K562 (cell line): ENCODE measurements at regions of chr10 and their contacts with region 1.

Region 1: DNA sequence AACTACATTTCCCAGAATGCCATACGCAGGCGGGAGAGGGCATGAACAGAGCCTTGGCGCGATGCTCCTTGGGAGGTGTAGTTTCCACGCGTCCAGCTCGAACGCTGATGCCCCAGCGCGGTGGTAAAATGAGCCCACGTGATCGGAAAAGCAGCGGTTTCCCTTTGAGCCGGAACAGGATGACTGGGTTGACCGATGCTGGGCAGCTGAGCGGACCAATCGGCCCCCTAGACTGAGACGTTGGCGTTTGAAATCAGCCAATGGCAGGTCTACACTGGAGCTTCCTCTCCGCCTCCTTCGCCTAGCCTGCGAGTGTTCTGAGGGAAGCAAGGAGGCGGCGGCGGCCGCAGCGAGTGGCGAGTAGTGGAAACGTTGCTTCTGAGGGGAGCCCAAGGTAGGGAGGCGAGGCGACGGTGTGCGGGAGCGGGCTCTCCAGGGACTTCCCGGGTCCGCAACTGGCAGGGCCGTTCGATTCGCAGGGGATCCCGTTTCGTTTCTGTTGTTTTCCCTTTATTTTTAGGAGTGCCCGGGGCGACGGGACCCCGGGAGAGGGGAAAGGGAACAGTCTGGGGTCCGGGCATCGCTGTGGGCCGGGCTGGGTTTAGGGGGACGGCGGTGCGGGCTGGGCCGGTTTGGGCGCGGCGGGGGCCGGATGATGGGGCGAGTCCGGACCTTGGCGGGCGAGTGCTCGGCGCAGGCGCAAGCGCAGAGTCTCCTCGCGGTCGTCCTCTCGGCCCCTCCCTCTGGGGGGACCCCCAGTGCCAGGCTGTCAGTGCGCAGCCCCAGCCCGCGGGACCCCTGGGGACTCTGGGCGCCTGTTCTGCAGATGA is at the start of gene BUB3:
- DNase-seq: peak; percentile 95 to 97 (median 96)
- ATAC-seq: peak; percentile 97
- H3K4me3 ChIP-seq: peak within 1 kb of the TSS; percentile 90
- H3K27ac ChIP-seq: peak within 1 kb of the TSS; percentile 98
- H3K4me1 ChIP-seq: peaks cover 13 to 25% of the 10 kb centered on the region in 2 experiments; a peak in 3 of 5 replicates
- H3K27me3 ChIP-seq: no peaks in the 10 kb centered on the region
- CTCF ChIP-seq: no peak
- EP300 ChIP-seq: no peak
- POLR2A ChIP-seq: peak; percentile 96
- RAD21 ChIP-seq: no peak
- polyA plus RNA-seq, gene BUB3: 597 to 761 TPM

Region 2: DNA sequence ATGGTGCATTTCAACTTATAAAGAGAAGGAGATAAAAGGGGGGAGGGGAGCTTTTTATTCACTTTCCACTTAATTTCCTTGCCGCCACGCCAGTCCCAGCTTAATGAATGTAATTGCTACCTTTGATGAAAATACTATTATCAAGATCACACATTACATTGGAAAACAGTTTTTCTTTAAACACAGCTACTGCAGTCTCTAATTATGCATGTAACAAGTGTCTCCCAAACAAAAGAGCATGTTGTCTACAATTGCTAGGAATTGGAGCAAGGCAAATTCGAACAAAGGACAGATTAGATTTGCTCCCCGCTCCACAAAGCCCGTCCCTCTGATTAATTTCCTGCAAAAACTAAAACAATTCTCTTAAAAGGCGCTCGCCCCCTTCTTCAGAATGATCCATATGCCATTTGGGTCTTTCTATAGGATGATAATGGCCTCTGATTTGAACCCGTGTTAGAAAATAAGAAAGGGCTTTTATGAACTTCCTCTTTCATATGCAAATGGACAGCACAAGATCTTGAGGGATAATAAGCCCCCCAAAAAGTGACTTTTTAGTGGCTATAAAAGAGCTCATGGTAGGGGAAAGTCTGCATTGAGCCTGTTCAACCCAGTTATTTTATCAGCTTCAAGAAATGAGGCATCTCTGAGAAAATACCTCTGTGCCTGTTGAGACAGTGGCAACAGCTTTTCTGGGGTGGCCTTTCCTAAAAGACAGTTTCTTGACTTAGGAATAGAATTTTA is 84.9 kb before region 1 on chr10:
- CTCF ChIA-PET with region 1: no interaction called
- POLR2A ChIA-PET with region 1: no interaction called
- in situ Hi-C with region 1: no loop called
- intact Hi-C with region 1: no loop called
- DNase-seq: no peak
- ATAC-seq: no peak
- H3K4me3 ChIP-seq: no peak overlapping the region
- H3K27ac ChIP-seq: no peak overlapping the region
- H3K4me1 ChIP-seq: no peaks in the 10 kb centered on the region
- H3K27me3 ChIP-seq: peaks cover 2 to 23% of the 10 kb centered on the region in 2 experiments; a peak in 3 of 5 replicates
- CTCF ChIP-seq: no peak
- EP300 ChIP-seq: no peak
- POLR2A ChIP-seq: no peak
- RAD21 ChIP-seq: no peak

Region 3: GRCh38 chr10:123139521-123140163 is 14.7 kb before region 1 on chr10:
- CTCF ChIA-PET with region 1: no interaction called
- POLR2A ChIA-PET with region 1: interaction called, 34 read pairs
- in situ Hi-C with region 1: no loop called
- intact Hi-C with region 1: loop called (anchors 1 kb)
- DNase-seq: peak; percentile 16 to 89 (median 45)
- ATAC-seq: peak; percentile 70
- H3K4me3 ChIP-seq: peak overlapping the region; percentile 73
- H3K27ac ChIP-seq: peak overlapping the region; percentile 99
- H3K4me1 ChIP-seq: peaks cover 11 to 34% of the 10 kb centered on the region in 2 experiments
- H3K27me3 ChIP-seq: no peaks in the 10 kb centered on the region
- CTCF ChIP-seq: no peak
- EP300 ChIP-seq: peak; percentile 48; the same call in 1 of the 2 replicates
- POLR2A ChIP-seq: peak; percentile 81
- RAD21 ChIP-seq: no peak

Region 4: DNA sequence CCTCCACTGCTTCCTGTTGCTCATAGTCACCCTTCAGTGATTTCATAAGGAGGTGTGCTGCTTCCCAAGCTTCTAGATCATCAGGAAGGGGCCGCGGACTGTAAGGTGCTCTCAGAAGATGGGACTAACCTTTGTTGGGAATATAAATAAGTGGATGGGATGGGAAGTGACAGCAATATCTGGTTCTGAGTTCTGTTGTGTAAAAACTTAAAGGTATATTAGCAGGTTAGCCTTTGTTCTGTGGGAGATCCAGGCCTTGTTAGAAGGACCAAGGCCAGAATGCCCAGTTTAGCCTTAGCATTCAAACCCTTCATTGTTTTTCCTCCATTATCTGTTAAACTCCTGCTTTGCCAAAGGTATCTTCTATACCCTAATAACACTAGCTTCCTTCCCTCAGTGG is 12.3 kb after region 1 on chr10:
- CTCF ChIA-PET with region 1: no interaction called
- POLR2A ChIA-PET with region 1: interaction called, 15 read pairs
- in situ Hi-C with region 1: no loop called
- intact Hi-C with region 1: no loop called
- DNase-seq: no peak
- ATAC-seq: peak; percentile 25
- H3K4me3 ChIP-seq: no peak overlapping the region
- H3K27ac ChIP-seq: no peak overlapping the region
- H3K4me1 ChIP-seq: no peaks in the 10 kb centered on the region; a peak in 1 of 5 replicates
- H3K27me3 ChIP-seq: no peaks in the 10 kb centered on the region
- CTCF ChIP-seq: no peak
- EP300 ChIP-seq: no peak
- POLR2A ChIP-seq: no peak
- RAD21 ChIP-seq: no peak

Region 5: GRCh38 chr10:123655751-123656150 is 501.4 kb after region 1 on chr10:
- CTCF ChIA-PET with region 1: no interaction called
- POLR2A ChIA-PET with region 1: no interaction called
- in situ Hi-C with region 1: no loop called
- intact Hi-C with region 1: no loop called
- DNase-seq: no peak
- ATAC-seq: no peak
- H3K4me3 ChIP-seq: no peak overlapping the region
- H3K27ac ChIP-seq: no peak overlapping the region
- H3K4me1 ChIP-seq: no peaks in the 10 kb centered on the region
- H3K27me3 ChIP-seq: no peaks in the 10 kb centered on the region
- CTCF ChIP-seq: no peak
- EP300 ChIP-seq: no peak
- POLR2A ChIP-seq: no peak
- RAD21 ChIP-seq: no peak